Mammary epithelial cell (primary cell): ENCODE measurements at regions of chr11 and their contacts with region 1.

Region 1: DNA sequence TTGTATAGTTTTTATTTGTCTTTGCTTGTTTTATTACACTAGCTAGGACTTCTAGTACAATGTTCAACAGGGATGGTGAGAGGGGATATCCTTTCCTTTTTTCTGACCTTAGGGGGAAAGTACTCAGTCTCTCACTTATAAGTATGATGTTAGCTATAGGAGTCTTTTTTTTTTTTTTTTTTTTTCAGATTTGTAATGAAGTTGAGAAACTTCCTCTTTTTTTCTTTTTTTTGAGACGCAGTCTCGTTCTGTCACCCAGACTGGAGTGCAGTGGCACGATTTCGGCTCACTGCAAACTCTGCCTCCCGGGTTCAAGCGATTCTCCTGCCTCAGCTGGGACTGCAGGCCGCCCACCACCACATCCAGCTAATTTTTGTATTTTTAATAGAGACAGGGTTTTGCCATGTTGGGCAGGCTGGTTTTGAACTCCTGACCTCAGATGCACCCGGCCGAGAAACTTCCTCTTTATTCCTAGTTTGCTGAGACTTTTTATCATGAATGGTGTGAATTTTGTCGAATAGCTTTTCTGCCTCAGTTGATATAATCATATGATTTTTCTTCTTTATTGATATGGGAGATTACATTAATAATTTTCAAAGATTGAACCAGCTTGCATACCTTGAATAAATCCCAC is 10.9 kb downstream of the TRIM22 start:
- DNase-seq: no peak
- H3K4me3 ChIP-seq: no peak overlapping the region
- H3K27ac ChIP-seq: no peak overlapping the region
- H3K4me1 ChIP-seq: no peaks in the 10 kb centered on the region
- H3K27me3 ChIP-seq: no peaks in the 10 kb centered on the region
- CTCF ChIP-seq: no peak

Region 2: DNA sequence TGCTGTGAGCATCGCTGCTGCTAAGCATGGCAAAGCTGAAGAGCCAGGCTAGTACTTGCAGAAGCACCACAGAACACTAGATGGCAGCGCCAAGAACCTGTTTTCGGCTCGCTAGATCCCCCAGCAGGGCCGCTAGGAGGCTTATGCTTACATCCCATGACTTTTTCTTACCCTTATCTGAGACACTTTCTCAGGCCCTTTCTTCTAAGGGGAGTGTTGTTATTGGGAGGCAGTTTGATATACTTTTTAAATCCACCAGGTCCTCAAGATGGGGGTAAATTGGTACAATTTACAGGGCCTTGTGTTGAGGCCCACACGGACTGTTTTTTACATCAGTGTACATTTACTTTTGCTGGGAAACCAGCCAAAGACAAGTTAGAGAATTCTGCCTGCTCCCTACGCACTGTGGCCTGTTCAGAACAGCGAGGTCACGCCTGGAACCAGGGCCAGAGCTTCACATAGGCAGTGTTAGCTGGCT is 100.1 kb before region 1 on chr11:
- CTCF ChIA-PET with region 1: no interaction called
- dilution Hi-C with region 1: no loop called
- in situ Hi-C with region 1: no loop called
- intact Hi-C with region 1: no loop called
- DNase-seq: no peak
- H3K4me3 ChIP-seq: no peak overlapping the region
- H3K27ac ChIP-seq: no peak overlapping the region
- H3K4me1 ChIP-seq: peaks cover 5% of the 10 kb centered on the region
- H3K27me3 ChIP-seq: no peaks in the 10 kb centered on the region
- CTCF ChIP-seq: peak; percentile 77 to 86

Region 3: DNA sequence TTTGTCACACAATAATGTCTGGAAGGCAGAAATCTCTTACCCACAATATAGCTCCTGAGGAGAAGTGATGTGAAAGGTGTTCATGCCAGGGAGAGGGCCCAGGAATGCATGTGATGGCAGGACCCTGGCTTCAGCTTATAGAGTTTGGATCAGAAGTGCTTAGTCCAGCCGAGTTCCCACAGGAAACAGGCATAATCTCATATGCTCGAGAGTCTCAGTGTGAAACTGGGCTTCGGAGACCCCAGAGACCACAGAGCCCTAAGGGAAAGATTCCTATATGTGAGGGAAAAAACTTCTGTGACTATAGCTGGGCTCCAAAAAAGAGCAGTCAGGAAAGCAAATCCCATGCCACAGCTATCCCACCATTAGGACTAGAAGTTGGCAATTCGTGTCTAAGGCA is 82.7 kb after region 1 on chr11 and contains the start of gene OR52N5:
- CTCF ChIA-PET with region 1: interaction called, 11 read pairs
- dilution Hi-C with region 1: no loop called
- in situ Hi-C with region 1: no loop called
- intact Hi-C with region 1: no loop called
- DNase-seq: no peak
- H3K4me3 ChIP-seq: no peak within 1 kb of the TSS
- H3K27ac ChIP-seq: no peak within 1 kb of the TSS
- H3K4me1 ChIP-seq: no peaks in the 10 kb centered on the region
- H3K27me3 ChIP-seq: no peaks in the 10 kb centered on the region
- CTCF ChIP-seq: no peak
- total RNA-seq, gene OR52N5: not detected